Posterior vena cava (tissue), 2 donors: ENCODE measurements at regions of chr1 and their contacts with region 1.

Region 1: DNA sequence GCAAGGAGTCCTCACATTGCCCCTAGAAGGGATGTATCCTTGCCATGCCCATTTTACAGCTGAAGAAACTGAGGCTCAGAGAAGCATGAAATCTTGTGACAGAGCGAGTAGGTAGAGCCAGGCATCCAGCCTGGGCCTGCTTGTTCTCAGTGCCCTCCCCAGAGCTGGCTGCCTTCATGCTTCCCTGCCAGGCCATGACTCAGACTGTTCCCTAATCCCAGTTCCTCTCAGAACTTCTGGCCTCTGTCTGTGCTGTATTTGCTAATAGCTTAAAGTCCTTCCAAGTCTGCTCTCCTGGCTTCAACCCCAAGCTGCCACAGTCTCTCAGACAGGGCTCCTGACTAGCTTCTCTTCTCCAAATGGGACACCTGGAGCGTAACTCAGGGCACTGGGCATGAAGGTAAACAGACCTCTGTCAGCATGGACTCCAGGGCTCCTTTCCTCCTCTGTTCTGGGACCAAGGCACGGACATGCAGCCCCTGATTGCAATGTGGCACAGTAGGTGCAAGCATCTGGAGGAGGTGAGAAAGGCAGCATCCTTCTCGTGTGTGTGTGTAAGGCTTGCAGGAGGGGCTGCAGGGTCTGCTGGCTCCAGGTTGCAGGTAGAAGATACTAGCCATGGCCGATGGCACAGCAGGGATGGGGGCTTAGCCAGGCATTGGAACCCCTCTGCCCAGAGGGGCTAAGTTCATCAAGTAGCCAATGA is 122.7 kb downstream of the HMGB4 start:
- DNase-seq: peak; percentile 87

Region 2: GRCh38 chr1:33893147-33893830 is 93.3 kb before region 1 on chr1:
- intact Hi-C with region 1: loop called in 1 of 2 experiments (anchors 10 kb)
- DNase-seq: no peak

Region 3: DNA sequence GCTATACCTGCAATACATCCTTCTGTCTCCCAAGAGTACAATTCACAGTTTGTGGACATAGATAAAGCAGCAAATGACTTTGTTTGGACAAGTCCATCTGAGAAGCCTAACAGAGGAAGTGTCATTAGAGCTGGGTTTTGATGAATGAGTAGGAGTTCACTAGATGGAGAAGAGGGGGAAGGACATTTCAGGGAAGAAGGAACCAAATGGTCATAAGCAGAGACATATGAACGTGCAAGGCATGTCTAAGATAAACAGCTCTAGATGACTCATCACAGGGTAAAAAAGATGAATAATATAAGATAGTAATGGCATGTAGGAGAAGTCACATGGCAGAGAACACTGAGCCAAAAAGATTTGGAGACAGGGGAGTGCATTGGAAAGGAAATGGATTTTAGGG is 68.2 kb before region 1 on chr1:
- intact Hi-C with region 1: no loop called
- DNase-seq: no peak

Region 4: DNA sequence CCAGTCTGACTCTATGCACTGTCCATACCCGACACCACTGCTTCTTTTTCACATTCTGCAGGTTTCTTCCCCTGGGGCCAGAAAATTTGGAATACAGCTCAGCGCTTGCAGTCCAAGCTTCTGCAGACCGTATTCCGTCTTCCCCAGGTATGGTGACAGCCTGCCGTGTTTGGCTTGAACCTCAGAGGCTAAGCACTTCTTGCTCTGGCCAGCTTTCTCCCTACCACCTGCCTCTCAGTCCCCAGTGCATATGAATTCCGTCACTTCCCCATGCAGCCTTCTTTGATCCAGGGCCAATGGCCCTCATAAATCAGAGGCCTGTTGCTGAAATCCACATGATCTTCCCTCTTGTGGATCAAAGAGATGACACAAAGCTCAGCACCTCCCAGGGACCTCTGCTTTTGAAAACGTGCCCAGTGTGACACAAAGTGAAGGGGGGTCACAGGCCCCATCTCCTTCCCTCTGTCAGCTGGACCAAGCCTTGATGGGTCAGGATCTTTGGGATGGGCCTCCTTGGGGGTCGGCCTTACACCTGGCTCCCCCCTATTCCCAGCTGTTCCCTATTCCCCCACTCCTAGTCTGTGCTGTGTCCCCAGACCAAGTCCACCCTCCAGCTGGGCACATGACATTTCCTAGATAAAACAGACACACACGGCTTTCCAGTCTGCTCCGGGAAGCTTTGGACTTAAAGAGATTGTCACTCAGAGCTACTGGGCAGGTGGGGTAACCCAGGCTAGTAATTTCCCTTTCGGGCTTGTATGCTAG is 56.0 kb before region 1 on chr1:
- intact Hi-C with region 1: no loop called
- DNase-seq: no peak

Region 5: GRCh38 chr1:33944027-33944426 is 42.5 kb before region 1 on chr1:
- intact Hi-C with region 1: loop called in 1 of 2 experiments (anchors 1 kb)
- DNase-seq: no peak